ENCODE measurements at regions of chr3 and their contacts with region 1.

Region 1: DNA sequence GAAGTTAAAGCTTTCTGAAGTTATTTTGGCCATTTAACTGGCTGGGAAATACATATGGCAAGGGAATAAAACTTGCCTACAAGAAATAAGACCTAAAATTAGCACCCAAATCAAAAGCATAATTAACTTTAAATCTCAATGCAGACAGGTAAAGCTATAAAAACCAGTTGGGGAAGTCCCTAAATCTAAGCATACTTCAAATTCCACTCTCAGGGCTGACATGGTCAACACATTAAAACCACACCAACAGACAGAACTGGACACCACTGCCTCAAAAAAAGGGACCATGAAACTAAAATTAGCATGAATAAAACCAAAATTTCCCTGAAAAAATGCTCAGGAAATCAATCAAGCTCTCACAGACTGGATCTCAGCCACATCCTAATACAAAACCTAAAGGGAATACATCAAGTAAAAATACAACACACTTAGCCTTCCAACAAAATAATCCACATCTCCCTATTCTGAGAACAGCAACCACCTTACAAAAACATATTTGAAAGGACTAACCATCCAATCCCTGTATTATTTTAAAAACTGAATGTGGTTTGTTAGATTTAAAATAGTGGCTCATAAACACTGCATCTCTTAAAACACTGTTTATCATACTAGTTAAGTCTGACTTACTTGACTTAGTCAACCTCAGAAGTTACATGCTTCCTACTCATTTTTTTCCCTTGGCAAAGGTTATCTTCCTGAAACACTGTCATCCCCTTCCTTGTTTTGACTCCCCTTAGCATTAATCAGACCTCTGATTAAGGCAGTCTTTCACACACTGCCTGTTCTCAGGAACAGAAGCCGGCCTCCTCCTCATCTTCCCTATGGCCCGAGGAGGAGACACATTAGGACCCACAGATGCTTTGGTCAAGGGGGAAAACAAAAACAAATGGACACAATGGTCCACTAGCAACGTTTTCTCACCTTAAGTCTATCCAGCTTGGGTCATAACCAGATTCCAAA is 8.3 kb downstream of the TRA2B start:
- DNase-seq: no peak
- ATAC-seq: peak; percentile 20; the same call in 2 of the 3 replicates
- H3K4me3 ChIP-seq: peak overlapping the region; percentile 59
- H3K27ac ChIP-seq: peak overlapping the region; percentile 13; the same call in 1 of the 2 replicates
- H3K4me1 ChIP-seq: peaks cover 23% of the 10 kb centered on the region
- H3K27me3 ChIP-seq: no peaks in the 10 kb centered on the region
- CTCF ChIP-seq: no peak
- EP300 ChIP-seq: no peak
- POLR2A ChIP-seq: no peak
- RAD21 ChIP-seq: no peak

Region 2: GRCh38 chr3:185912929-185913901 is 16.3 kb before region 1 on chr3:
- CTCF ChIA-PET with region 1: interaction called, 3 read pairs
- POLR2A ChIA-PET with region 1: interaction called, 4 read pairs
- RAD21 ChIA-PET with region 1: interaction called, 3 read pairs
- SMC1A ChIA-PET with region 1: interaction called, 11 read pairs
- in situ Hi-C with region 1: no loop called
- intact Hi-C with region 1: no loop called
- DNase-seq: no peak
- ATAC-seq: peak; percentile 31
- H3K4me3 ChIP-seq: no peak overlapping the region
- H3K27ac ChIP-seq: no peak overlapping the region
- H3K4me1 ChIP-seq: no peaks in the 10 kb centered on the region
- H3K27me3 ChIP-seq: no peaks in the 10 kb centered on the region
- CTCF ChIP-seq: no peak
- EP300 ChIP-seq: no peak
- POLR2A ChIP-seq: no peak; the same call in 1 of the 2 replicates
- RAD21 ChIP-seq: no peak

Measured in GM12878 (cell line).